ENCODE measurements at regions of chr1 and their contacts with region 1.

Region 1: DNA sequence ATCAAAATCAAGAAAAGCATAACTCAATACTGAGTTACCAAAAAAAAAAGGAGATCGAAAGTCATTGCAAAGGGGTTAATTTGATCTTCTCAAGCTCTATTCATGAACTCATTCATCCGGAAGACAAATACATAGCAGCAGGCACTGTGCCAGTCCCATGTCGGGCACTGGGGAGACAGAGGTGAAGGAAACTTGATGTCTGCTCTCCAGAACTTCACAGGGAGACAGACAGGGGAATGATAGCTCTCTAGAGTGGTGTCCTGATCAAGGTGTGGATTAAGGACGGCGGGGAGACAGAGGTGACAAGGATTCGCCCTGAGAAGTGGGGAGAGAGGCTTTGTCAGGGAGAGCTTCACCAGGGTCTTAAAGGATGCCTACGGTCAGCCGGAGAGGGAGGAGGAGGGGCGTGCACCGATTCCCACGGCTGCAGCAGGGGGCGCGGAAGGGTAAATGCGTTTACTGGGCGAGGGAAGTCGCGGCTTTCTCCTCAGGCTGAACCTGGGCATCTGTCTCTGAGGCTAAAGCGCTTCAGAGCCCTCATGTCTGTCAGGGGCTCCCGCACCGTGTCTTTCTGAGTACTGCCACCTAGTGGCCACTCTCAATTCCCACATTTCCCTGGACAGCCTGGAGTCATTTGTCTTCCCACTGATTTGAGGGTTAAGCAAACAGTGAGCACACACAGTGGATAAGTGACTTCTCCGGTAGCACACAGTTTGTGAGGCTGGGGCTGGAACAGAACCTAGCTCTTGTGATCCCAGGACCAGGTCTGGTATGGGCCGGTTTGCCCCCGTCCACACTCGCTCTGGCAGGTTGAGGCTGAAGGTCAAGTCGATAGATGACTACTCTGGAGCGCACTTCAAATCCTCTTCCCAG is 152.8 kb downstream of the TENT5C start:
- DNase-seq: peak; percentile 86
- H3K4me3 ChIP-seq: peak overlapping the region; percentile 15 to 39 (median 29)
- H3K27ac ChIP-seq: no peak overlapping the region
- H3K4me1 ChIP-seq: peaks cover 8% of the 10 kb centered on the region
- H3K27me3 ChIP-seq: peaks cover 10% of the 10 kb centered on the region in 2 experiments
- CTCF ChIP-seq: peak; percentile 79 to 83
- POLR2A ChIP-seq: no peak

Region 2: DNA sequence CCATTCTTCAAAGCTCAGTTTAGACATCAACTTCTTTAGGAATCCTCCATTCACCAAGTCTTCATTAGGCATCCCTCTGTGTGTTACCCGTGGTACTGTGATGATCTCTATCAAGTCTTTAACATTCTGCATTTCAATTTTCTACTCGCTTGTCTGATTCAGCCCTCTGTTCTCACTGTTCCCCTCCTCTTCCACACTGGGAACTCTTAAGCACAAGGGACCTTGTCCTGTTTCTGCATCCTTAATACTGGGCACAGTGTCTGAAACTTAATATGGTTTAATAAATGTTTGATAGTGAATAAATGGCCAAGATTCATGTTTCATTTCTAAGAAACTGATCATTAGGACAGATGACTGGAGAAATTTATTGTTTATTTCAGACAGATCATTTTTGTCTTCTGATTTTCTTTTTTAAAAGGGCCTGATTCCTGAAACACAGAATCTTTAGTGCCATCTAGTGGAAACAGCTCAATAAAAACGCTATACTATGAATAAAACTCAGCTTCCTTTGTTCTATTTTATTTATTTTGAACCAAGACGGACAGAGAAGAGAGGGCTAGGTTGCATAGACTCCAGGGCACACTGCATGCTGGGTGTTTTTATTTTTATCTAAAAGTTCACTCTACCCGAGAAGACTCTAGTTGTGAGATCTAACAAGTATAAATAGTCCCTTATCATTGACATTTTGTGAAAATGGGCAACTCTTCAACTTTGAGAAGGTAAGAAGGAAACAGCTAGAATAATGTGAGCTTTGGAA is 630.2 kb before region 1 on chr1:
- CTCF ChIA-PET with region 1: interaction called, 14 read pairs
- POLR2A ChIA-PET with region 1: no interaction called
- dilution Hi-C with region 1: no loop called
- intact Hi-C with region 1: loop called (anchors 10 kb)
- DNase-seq: peak; percentile 68
- H3K4me3 ChIP-seq: no peak overlapping the region
- H3K27ac ChIP-seq: no peak overlapping the region
- H3K4me1 ChIP-seq: no peaks in the 10 kb centered on the region
- H3K27me3 ChIP-seq: peaks cover 11 to 25% of the 10 kb centered on the region in 2 experiments
- CTCF ChIP-seq: peak; percentile 36 to 37
- POLR2A ChIP-seq: no peak

Region 3: GRCh38 chr1:117534995-117535467 is 223.6 kb before region 1 on chr1:
- CTCF ChIA-PET with region 1: interaction called, 398 read pairs
- POLR2A ChIA-PET with region 1: no interaction called
- dilution Hi-C with region 1: loop called (anchors 25 kb)
- intact Hi-C with region 1: loop called (anchors 1 kb)
- DNase-seq: peak; percentile 47
- H3K4me3 ChIP-seq: no peak overlapping the region
- H3K27ac ChIP-seq: no peak overlapping the region
- H3K4me1 ChIP-seq: no peaks in the 10 kb centered on the region
- H3K27me3 ChIP-seq: peaks cover 0 to 2% of the 10 kb centered on the region in 2 experiments
- CTCF ChIP-seq: peak; percentile 50 to 74
- POLR2A ChIP-seq: no peak

Region 4: GRCh38 chr1:117710710-117711109 is 48.0 kb before region 1 on chr1:
- CTCF ChIA-PET with region 1: interaction called, 10 read pairs
- POLR2A ChIA-PET with region 1: no interaction called
- dilution Hi-C with region 1: no loop called
- intact Hi-C with region 1: loop called (anchors 2 kb)
- DNase-seq: no peak
- H3K4me3 ChIP-seq: no peak overlapping the region
- H3K27ac ChIP-seq: no peak overlapping the region
- H3K4me1 ChIP-seq: no peaks in the 10 kb centered on the region
- H3K27me3 ChIP-seq: peaks cover 4 to 5% of the 10 kb centered on the region in 2 experiments
- CTCF ChIP-seq: peak; percentile 14 to 35
- POLR2A ChIP-seq: no peak

Region 5: DNA sequence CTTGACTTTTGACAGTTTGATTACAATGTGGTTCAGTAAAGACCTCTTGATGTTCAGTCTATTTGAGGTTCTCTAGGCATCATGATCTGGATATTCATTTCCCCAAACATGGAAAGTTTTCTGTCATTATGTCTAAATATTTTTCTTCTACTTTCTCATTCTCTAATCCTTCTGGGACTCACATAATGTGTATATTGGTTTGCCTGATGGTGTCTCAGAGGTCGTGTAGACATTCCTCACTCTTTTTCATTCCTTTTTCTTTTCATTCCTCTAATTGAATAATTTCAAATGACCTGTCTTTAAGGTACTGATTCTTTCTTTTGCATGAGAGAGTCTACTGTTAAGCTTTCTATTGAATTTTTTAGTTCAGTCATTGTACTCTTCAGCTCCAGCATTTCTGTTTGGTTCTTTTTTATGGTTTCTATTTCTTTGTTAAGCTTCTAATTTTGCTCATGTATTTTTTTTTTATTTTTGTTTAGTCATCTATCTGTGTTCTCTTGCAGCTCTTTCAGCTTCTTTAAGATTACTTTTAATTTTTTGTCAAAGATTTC is 12.4 kb after region 1 on chr1:
- CTCF ChIA-PET with region 1: interaction called, 11 read pairs
- POLR2A ChIA-PET with region 1: no interaction called
- dilution Hi-C with region 1: no loop called
- intact Hi-C with region 1: no loop called
- DNase-seq: no peak
- H3K4me3 ChIP-seq: no peak overlapping the region
- H3K27ac ChIP-seq: no peak overlapping the region
- H3K4me1 ChIP-seq: no peaks in the 10 kb centered on the region
- H3K27me3 ChIP-seq: no peaks in the 10 kb centered on the region
- CTCF ChIP-seq: no peak
- POLR2A ChIP-seq: no peak